Esophagus muscularis mucosa (tissue), 4 donors: ENCODE measurements at regions of chr20 and their contacts with region 1.

Region 1: DNA sequence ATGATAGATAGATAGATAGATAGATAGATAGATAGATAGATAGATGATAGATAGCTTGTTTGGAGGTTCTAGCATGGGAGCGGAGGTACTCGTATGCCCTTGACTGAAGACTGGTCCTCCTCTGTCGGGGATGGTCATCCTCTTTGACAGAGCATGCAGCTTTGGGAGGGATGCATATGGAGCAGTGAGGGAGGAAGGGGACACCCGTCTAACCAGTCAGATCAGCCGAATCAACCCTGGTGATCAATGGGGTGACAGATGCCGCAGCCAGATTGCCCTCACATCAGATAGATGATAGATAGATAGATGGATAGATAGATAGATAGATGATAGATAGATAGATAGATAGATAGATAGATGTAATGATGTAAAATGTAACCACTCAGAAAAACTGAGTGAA is 98.9 kb upstream of the BTBD3 start:
- DNase-seq: no peak
- H3K4me3 ChIP-seq: no peak overlapping the region
- H3K27ac ChIP-seq: no peak overlapping the region
- H3K4me1 ChIP-seq: peaks cover 0 to 14% (median 14%) of the 10 kb centered on the region in 4 donors
- H3K27me3 ChIP-seq: no peaks in the 10 kb centered on the region
- CTCF ChIP-seq: no peak
- EP300 ChIP-seq: no peak
- POLR2A ChIP-seq: no peak

Region 2: DNA sequence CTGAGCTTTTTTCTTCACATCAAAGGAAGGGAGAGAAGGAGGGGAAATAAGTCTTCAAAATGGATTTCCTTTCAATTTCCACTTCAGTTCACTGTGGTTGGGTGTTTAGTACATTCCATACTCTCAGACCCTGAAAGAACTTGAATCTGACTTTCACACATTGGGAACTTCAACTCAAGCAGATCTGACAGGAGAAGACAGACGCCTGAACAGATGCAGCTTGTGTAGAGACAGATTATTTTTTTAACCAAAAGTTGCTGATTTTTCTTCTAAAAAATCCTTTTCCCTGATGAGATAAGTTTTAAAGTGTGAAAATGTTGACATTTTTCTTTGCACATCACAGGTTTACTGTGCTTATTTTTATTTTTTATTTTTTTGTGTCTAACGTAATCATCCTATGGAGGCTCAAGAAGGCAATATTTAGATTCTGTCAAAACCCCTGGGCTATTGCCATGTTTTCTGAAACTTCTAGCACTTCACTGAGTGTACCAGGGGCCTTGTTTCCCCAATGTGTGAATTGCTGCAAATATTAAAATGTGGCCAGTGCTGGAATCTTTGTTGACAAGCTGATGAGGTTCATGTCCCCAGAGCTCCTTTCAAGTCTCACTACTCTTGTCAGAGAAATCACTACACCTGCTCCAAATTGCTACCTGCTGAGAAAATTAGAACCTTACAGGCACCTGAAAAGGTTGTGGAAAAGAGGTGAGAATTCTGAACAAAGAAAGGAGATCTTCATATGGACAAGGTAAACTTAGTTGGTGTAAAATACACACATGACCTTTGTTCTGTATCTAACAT is 115.9 kb before region 1 on chr20:
- intact Hi-C with region 1: no loop called
- DNase-seq: no peak
- H3K4me3 ChIP-seq: no peak overlapping the region
- H3K27ac ChIP-seq: no peak overlapping the region
- H3K4me1 ChIP-seq: no peaks in the 10 kb centered on the region
- H3K27me3 ChIP-seq: no peaks in the 10 kb centered on the region
- CTCF ChIP-seq: no peak
- EP300 ChIP-seq: no peak
- POLR2A ChIP-seq: no peak

Region 3: DNA sequence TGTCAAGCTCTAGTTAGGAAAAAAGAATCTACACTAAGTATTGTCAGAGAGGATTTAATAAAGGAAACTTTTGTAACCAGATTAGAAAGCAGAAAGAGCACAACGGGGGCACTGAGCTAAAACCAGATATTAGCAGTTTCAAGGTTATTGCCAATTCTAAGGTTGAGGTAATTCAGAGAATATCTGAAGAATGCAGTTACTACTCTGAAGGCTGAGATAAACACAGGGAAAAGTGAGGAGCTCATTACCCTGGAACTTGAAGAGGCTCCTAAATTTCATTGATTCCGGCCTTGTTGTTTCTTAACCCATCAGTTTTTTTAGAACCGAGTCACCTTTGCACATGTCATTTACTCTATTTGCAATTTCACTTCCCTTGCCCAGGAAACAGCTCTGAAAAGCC is 26.5 kb after region 1 on chr20:
- intact Hi-C with region 1: no loop called
- DNase-seq: no peak
- H3K4me3 ChIP-seq: no peak overlapping the region
- H3K27ac ChIP-seq: no peak overlapping the region
- H3K4me1 ChIP-seq: no peaks in the 10 kb centered on the region
- H3K27me3 ChIP-seq: no peaks in the 10 kb centered on the region
- CTCF ChIP-seq: no peak
- EP300 ChIP-seq: no peak
- POLR2A ChIP-seq: no peak

Region 4: GRCh38 chr20:11888648-11889047 is 69.8 kb after region 1 on chr20:
- intact Hi-C with region 1: loop called (anchors 5 kb)
- DNase-seq: no peak
- H3K4me3 ChIP-seq: no peak overlapping the region
- H3K27ac ChIP-seq: no peak overlapping the region
- H3K4me1 ChIP-seq: peaks cover 9 to 30% (median 22%) of the 10 kb centered on the region in 4 donors
- H3K27me3 ChIP-seq: no peaks in the 10 kb centered on the region
- CTCF ChIP-seq: no peak
- EP300 ChIP-seq: no peak
- POLR2A ChIP-seq: no peak

Region 5: DNA sequence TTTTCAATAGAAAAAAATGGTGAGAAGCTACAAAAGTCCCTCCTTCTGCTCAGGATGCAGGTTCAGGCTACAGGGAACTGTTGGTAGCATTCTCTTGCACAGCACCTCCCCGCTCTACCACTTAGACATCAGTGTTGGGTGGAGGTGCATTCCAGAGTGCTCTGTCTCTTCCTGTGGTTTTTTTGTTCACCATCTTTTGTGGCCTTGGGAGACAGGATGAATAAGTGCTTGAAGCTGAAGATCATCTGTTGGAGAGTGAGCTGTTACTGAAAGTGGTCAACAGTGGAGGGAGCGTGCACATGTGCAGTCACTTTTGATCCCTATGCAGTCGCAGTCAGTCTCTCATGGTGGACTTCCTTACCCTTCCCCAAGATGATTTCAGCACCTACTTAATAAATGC is 82.3 kb after region 1 on chr20:
- intact Hi-C with region 1: no loop called
- DNase-seq: no peak
- H3K4me3 ChIP-seq: no peak overlapping the region
- H3K27ac ChIP-seq: no peak overlapping the region
- H3K4me1 ChIP-seq: peaks cover 0 to 6% (median 3%) of the 10 kb centered on the region in 4 donors
- H3K27me3 ChIP-seq: no peaks in the 10 kb centered on the region
- CTCF ChIP-seq: no peak
- EP300 ChIP-seq: no peak
- POLR2A ChIP-seq: no peak

Region 6: GRCh38 chr20:12467758-12468157 is 649.0 kb after region 1 on chr20:
- intact Hi-C with region 1: no loop called
- DNase-seq: no peak
- H3K4me3 ChIP-seq: no peak overlapping the region
- H3K27ac ChIP-seq: no peak overlapping the region
- H3K4me1 ChIP-seq: no peaks in the 10 kb centered on the region
- H3K27me3 ChIP-seq: no peaks in the 10 kb centered on the region
- CTCF ChIP-seq: no peak
- EP300 ChIP-seq: no peak
- POLR2A ChIP-seq: no peak